MCF 10A (cell line): ENCODE measurements at regions of chr5 and their contacts with region 1.

Region 1: DNA sequence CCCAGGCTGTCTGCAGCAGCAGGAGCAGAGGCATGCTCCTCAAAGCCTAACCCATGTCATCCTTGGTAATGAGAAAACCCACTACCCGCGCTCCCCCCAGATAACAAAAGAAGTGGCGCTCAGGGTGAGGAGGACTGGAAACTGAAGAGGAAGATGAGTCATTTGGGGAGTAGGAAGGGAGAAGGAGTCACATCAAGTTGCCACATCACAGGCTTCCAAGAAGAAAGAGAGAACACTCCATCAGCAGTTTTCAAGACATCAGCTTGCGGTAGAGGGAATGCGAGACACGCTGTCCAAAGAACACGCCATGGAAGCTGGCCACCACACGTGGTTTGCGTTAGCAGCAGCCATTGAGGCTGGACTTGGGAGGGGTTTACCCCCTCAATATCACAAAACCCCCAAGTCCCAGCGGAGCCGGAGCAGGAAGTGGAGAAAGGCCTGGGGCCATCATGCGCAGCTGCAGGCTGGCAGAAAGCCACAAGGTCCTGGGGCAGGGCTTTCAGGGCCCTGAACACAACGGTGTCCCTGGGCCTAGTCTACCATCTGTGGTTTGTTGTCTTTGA is 41.5 kb downstream of the SH3PXD2B start:
- DNase-seq: peak; percentile 99
- H3K4me3 Mint-ChIP-seq: peak overlapping the region; percentile 19
- H3K27ac Mint-ChIP-seq: peak overlapping the region; percentile 76
- H3K4me1 Mint-ChIP-seq: peaks cover 59% of the 10 kb centered on the region
- H3K27me3 Mint-ChIP-seq: no peaks in the 10 kb centered on the region
- CTCF ChIP-seq: no peak

Region 2: GRCh38 chr5:172334196-172334595 is 78.6 kb before region 1 on chr5:
- CTCF ChIA-PET with region 1: no interaction called
- POLR2A ChIA-PET with region 1: no interaction called
- intact Hi-C with region 1: no loop called
- DNase-seq: no peak
- H3K4me3 Mint-ChIP-seq: no peak overlapping the region
- H3K27ac Mint-ChIP-seq: no peak overlapping the region
- H3K4me1 Mint-ChIP-seq: no peaks in the 10 kb centered on the region
- H3K27me3 Mint-ChIP-seq: no peaks in the 10 kb centered on the region
- CTCF ChIP-seq: no peak

Region 3: DNA sequence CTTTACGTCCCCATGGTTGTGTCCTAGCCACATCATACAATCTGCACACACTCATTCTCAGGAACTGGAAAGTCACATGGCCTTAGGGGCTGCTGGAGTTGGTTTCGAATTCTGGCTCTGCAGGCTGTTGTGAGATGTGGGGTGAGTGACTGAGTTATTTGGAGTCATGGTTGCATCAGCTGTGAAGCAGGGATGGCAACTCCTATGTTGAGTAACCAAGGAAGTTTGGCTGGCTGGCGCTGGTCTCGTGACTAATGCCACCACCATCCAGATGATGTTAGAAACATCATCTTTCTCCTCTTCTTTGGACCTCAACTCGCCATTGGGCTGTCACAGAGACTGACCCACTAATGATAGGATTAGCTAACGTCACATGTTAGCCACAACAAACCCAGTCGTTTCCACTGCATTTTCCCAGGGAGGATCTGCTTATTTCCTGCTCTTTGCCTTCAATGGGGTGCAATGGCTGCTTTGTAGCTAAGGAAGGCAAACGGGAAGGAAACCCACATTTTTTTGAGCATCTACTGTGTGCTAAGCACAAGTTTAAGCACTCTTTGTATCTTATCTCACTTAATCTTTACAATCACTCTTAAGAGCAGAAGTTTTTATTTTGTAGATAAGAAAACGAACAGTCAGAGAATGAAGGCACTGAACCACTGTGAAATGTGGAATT is 51.1 kb before region 1 on chr5:
- CTCF ChIA-PET with region 1: no interaction called
- POLR2A ChIA-PET with region 1: interaction called, 29 read pairs
- intact Hi-C with region 1: loop called (anchors 2 kb)
- DNase-seq: peak; percentile 100
- H3K4me3 Mint-ChIP-seq: peak overlapping the region; percentile 58
- H3K27ac Mint-ChIP-seq: peak overlapping the region; percentile 99
- H3K4me1 Mint-ChIP-seq: peaks cover 46% of the 10 kb centered on the region
- H3K27me3 Mint-ChIP-seq: no peaks in the 10 kb centered on the region
- CTCF ChIP-seq: no peak

Region 4: GRCh38 chr5:172402531-172403188 is 10.1 kb before region 1 on chr5:
- CTCF ChIA-PET with region 1: interaction called, 3 read pairs
- POLR2A ChIA-PET with region 1: interaction called, 110 read pairs
- intact Hi-C with region 1: no loop called
- DNase-seq: no peak
- H3K4me3 Mint-ChIP-seq: no peak overlapping the region
- H3K27ac Mint-ChIP-seq: no peak overlapping the region
- H3K4me1 Mint-ChIP-seq: peaks cover 26% of the 10 kb centered on the region
- H3K27me3 Mint-ChIP-seq: no peaks in the 10 kb centered on the region
- CTCF ChIP-seq: no peak

Region 5: GRCh38 chr5:172443441-172444109 is 30.8 kb after region 1 on chr5:
- CTCF ChIA-PET with region 1: interaction called, 4 read pairs
- POLR2A ChIA-PET with region 1: interaction called, 305 read pairs
- intact Hi-C with region 1: loop called (anchors 1 kb)
- DNase-seq: peak; percentile 100
- H3K4me3 Mint-ChIP-seq: peak overlapping the region; percentile 28
- H3K27ac Mint-ChIP-seq: peak overlapping the region; percentile 46
- H3K4me1 Mint-ChIP-seq: peaks cover 26% of the 10 kb centered on the region
- H3K27me3 Mint-ChIP-seq: no peaks in the 10 kb centered on the region
- CTCF ChIP-seq: no peak

Region 6: DNA sequence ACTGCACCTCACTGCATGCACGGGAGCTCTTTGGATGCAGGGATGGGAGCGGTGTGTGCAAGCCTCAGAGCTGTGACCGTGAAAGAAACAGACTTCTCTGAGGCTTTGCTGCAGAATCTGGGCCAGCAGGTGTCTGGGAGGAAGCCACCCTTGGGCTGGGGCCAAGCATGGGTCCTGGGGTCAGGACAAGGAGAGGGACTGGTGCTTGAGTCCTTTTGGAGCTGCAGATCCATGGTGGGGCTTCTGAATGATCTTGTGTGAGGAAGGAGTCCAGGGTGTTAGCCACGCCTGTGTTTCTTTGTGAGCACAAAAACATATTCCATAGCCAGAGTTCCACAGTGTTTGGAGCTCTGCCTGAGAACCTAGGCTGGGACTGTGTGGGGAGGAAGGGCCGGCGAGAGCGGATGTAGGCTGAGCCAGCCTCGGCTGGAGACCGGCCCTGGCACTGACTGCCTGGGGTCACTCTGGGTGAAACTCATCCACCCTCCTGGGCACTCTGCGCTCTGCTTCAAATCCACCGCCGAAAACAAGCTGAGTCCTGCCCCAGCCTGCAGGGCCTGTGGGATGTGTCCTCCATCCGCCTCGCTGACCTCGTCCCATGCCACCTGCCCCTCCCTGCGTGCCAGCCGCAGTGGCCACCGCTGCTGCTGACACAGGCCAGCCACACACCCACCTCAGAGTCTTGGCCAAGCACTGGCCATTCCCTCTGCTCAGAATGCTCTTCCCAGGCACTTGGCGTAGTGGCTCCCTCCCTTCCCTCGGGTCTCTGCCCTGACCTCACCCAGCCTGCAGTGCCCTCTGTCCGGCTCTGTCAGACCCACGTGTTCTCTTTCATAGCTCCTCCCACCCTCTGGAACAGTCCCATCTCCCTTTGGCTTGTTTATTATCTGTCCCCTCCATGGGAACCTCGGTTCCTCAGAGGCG is 448.0 kb after region 1 on chr5:
- CTCF ChIA-PET with region 1: no interaction called
- POLR2A ChIA-PET with region 1: no interaction called
- intact Hi-C with region 1: no loop called
- DNase-seq: peak; percentile 96
- H3K4me3 Mint-ChIP-seq: peak overlapping the region; percentile 50
- H3K27ac Mint-ChIP-seq: peak overlapping the region; percentile 75
- H3K4me1 Mint-ChIP-seq: peaks cover 64% of the 10 kb centered on the region
- H3K27me3 Mint-ChIP-seq: no peaks in the 10 kb centered on the region
- CTCF ChIP-seq: no peak